ENCODE measurements at regions of chr20 and their contacts with region 1.

Region 1: DNA sequence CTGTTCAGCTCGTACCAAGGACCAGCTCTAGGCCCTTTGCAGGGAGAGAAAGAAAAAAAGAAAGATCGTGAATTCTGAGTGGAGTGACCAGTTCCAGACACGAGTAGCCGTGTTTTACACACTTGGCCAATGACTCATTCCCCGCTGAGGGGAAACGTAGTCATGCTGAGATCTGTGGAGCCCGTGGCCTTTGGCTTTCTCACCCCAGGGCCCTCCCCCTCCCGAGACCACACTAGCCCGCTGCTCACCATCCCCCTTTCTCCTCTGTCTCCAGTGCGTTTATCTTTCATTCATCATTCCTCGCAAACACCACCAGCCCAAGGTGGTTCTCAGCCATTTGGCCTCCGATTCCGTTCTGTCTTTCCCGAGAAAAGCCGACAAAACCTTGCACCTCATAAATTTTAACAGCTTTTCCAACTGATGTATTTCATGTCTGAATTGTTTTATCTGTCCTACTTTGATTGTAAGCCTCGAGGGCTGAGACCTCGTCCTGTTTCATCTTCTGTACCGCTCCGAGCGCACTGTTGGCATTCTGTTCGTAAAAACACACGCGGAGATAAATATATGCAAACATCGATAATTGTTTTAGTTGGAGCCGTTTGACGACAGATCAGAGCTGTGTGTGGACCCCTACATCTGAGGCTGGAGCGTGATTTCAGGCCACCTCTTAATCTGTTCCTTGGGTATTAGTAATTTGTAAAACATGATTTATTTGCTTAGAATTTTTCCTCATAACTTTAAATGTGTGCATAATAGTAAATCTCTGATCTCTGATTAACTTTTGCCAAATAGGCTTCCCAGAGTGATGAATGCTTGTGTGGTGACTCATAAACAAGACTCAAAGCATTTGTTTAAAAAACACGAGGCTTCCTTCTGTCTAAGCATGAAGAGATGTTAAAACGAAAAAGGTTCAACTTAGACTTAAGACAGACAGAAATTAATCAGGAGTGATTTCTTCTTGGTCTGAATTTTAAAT is 336.6 kb downstream of the CDH4 start:
- DNase-seq: peak; percentile 46
- H3K4me3 ChIP-seq: no peak overlapping the region
- H3K27ac ChIP-seq: no peak overlapping the region
- H3K4me1 ChIP-seq: peaks cover 8% of the 10 kb centered on the region
- H3K27me3 ChIP-seq: no peaks in the 10 kb centered on the region
- CTCF ChIP-seq: no peak

Region 2: DNA sequence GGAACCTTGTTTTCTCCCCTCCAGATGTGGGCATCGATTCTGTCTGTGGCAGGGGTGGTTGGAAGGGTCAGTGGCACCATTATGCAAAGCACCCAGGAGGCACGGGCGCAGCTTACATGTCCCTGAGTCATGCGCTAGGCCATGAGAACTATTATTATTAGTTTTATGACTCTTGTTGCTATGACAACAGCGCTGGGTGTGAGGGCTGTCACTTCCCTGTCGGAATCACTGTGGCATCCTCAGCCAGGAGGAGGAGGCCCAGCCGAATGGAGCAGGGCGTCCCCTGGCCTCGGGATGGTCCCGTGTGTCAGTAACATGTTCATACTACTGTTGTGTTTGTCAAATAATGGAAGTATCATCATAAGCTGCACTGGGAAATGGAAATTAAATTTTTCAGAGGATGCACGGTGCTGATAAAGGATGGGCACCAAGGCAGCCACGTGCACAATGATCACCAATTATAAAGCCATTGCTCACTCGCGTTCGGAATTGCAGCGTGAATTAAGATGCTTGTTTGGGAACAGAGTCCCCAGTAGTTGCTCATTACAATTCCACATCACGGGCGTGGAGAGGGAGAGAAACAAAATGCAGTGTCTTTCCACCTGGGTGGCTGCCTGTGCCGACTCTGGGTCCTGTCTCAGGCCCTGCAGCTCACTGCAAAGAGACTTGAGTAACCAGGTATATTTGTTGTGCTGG is 88.7 kb before region 1 on chr20:
- CTCF ChIA-PET with region 1: no interaction called
- dilution Hi-C with region 1: no loop called
- in situ Hi-C with region 1: loop called in 1 of 2 experiments (anchors 25 kb)
- intact Hi-C with region 1: no loop called
- DNase-seq: no peak
- H3K4me3 ChIP-seq: no peak overlapping the region
- H3K27ac ChIP-seq: no peak overlapping the region
- H3K4me1 ChIP-seq: peaks cover 19% of the 10 kb centered on the region
- H3K27me3 ChIP-seq: no peaks in the 10 kb centered on the region
- CTCF ChIP-seq: no peak